CD8-positive, alpha-beta T cell (primary cell): ENCODE measurements at regions of chr11 and their contacts with region 1.

Region 1: GRCh38 chr11:75562048-75562835 is at the start of gene SERPINH1:
- DNase-seq: peak in 8 of 9 experiments; percentile 32 to 74 (median 51)
- ATAC-seq: peak; percentile 79
- H3K4me3 ChIP-seq: peak within 1 kb of the TSS; percentile 81 to 91
- H3K4me3 Mint-ChIP-seq: peak within 1 kb of the TSS; percentile 98
- H3K27ac ChIP-seq: peak within 1 kb of the TSS; percentile 64 to 85
- H3K27ac Mint-ChIP-seq: peak within 1 kb of the TSS; percentile 95
- H3K4me1 ChIP-seq: peaks cover 42% of the 10 kb centered on the region
- H3K4me1 Mint-ChIP-seq: peaks cover 49% of the 10 kb centered on the region
- H3K27me3 ChIP-seq: no peaks in the 10 kb centered on the region
- H3K27me3 Mint-ChIP-seq: no peaks in the 10 kb centered on the region
- CTCF ChIP-seq: no peak
- total RNA-seq, gene SERPINH1: 2.1 to 2.4 TPM

Region 2: DNA sequence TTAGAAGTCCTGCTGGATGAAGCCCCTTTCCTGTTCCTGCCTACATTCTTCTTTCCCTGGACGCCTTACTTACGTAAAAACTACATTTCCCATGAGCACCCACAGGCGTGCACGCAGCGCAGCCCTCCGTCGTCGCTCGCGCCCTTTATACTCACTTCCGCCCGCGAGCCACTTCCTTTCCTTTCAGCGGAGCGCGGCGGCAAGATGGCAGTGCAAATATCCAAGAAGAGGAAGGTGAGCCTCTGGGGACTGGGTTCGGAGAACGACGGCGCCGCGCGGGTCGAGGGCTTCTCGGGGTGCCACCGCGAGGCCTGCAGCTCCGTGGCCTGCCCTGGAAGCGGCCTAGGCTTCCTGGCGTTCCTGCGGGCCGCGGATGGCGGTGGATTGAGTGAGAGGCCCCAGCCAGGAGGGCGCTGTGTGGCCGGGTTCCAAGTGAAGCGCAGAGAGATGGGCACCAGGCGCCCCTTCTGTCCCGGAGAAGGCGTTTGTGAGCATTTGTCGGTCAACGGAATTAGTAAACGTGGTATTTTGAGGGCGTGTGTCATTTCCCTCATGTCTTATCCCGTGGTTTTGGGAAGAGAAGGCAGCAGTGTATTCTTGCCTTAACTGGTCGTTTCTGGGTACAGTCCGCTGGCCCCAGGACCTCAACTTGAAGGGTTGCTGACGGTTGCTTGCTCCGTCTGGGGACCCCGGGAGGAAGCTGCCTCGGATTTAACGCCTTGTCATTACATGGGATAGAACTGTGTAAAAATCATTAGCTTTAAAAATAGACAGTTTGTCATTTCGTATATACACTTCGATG is 162.7 kb before region 1 on chr11 and contains the start of gene RPS3:
- CTCF ChIA-PET with region 1: no interaction called
- POLR2A ChIA-PET with region 1: no interaction called
- intact Hi-C with region 1: loop called in 1 of 2 experiments (anchors 1 kb)
- DNase-seq: peak; percentile 72 to 93 (median 88)
- ATAC-seq: peak; percentile 88
- H3K4me3 ChIP-seq: peak within 1 kb of the TSS; percentile 69 to 76
- H3K4me3 Mint-ChIP-seq: peak within 1 kb of the TSS; percentile 95
- H3K27ac ChIP-seq: peak within 1 kb of the TSS; percentile 88 to 89
- H3K27ac Mint-ChIP-seq: peak within 1 kb of the TSS; percentile 95
- H3K4me1 ChIP-seq: peaks cover 28% of the 10 kb centered on the region
- H3K4me1 Mint-ChIP-seq: peaks cover 48% of the 10 kb centered on the region
- H3K27me3 ChIP-seq: no peaks in the 10 kb centered on the region
- H3K27me3 Mint-ChIP-seq: no peaks in the 10 kb centered on the region
- CTCF ChIP-seq: no peak
- total RNA-seq, gene RPS3: 4,683 to 5,039 TPM

Region 3: DNA sequence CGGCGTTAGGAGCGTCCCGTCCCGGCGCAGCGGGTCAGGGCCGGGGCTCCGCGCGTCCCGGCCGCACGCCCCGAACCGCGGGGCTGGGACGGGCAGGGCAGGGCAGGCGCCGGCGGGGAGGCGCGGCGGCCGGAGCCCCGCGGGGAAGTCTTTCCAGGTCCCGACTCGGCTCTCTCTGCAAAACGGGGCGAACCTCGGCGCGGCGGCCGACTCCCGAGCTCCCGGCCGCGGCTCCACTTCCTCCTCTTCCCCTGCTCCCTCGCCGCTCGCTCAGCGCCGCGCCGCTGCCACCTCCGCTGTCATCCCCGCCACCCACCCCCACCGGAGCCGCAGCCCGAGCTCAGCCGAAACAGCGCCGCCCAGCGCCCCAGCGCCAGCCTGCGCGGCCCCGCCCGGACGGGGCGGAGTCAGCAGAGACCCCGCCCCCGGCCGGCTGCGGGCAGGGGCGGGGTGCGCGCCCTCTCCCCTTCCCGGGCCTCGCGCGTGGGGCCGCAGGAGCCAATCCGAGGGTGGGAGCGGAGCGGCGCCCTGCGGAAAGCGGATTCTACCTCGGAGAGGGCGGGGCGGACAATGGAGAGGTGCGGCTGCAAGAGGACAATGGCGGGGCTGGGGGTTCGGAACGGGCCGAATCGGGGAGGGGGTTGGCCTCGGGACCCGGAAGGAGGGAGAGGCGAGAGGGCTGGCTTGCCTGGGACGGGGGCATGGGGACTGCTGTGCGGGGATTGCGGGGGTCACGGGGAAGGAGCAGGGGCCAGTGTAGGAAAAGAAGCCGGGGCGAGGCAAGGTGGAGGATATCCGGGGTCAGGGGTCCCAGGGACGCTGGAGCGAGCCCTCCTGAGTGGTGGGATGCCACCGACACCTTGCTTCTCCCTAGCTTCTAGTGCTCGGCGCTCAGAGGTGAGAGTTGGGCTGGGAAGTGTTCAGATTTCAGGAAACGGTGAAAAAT is 36.4 kb before region 1 on chr11 and contains the start of gene GDPD5:
- CTCF ChIA-PET with region 1: interaction called, 3 read pairs
- POLR2A ChIA-PET with region 1: no interaction called
- intact Hi-C with region 1: loop called (anchors 1 to 2 kb)
- DNase-seq: peak; percentile 63 to 93 (median 84)
- ATAC-seq: peak; percentile 97
- H3K4me3 ChIP-seq: peak within 1 kb of the TSS; percentile 66 to 78
- H3K4me3 Mint-ChIP-seq: peak within 1 kb of the TSS; percentile 89
- H3K27ac ChIP-seq: no peak within 1 kb of the TSS
- H3K27ac Mint-ChIP-seq: peak within 1 kb of the TSS; percentile 46
- H3K4me1 ChIP-seq: peaks cover 12% of the 10 kb centered on the region
- H3K4me1 Mint-ChIP-seq: peaks cover 26% of the 10 kb centered on the region
- H3K27me3 ChIP-seq: peaks cover 0 to 4% of the 10 kb centered on the region in 2 experiments
- H3K27me3 Mint-ChIP-seq: no peaks in the 10 kb centered on the region
- CTCF ChIP-seq: peak; percentile 39
- total RNA-seq, gene GDPD5: 15.9 to 18.3 TPM

Region 4: DNA sequence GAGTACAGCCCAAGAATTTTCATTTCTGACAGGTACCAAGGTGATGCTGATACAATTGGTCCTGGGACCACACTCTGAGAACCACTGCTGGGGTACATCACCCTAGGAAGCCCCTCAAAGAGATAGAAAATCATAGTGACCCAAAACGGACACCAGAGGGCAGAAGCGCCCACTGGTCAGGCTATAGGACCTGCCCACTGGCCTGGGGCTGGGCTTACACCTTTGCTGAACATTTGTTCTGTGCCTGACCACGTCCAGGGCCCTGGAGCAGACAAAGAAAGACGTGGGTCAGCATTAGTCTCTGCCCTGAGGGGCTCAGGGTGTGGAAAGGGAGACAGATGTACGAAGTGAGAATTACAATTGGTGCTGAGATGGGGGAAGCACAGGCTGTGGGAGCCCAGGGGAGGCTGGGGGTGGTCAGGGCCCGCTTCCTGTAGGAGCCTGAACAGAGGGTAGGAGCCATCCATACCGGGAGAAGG is 14.6 kb before region 1 on chr11:
- CTCF ChIA-PET with region 1: interaction called, 12 read pairs
- POLR2A ChIA-PET with region 1: interaction called, 3 read pairs
- intact Hi-C with region 1: no loop called
- DNase-seq: peak in 5 of 9 experiments; percentile 28 to 63 (median 56)
- ATAC-seq: peak; percentile 54
- H3K4me3 ChIP-seq: no peak overlapping the region
- H3K4me3 Mint-ChIP-seq: no peak overlapping the region
- H3K27ac ChIP-seq: no peak overlapping the region
- H3K27ac Mint-ChIP-seq: no peak overlapping the region
- H3K4me1 ChIP-seq: no peaks in the 10 kb centered on the region
- H3K4me1 Mint-ChIP-seq: peaks cover 2% of the 10 kb centered on the region
- H3K27me3 ChIP-seq: peaks cover 0 to 3% of the 10 kb centered on the region in 2 experiments
- H3K27me3 Mint-ChIP-seq: peaks cover 4% of the 10 kb centered on the region
- CTCF ChIP-seq: peak; percentile 80

Region 5: GRCh38 chr11:75577207-75577606 is 15.0 kb after region 1 on chr11:
- CTCF ChIA-PET with region 1: interaction called, 65 read pairs
- POLR2A ChIA-PET with region 1: interaction called, 12 read pairs
- intact Hi-C with region 1: loop called in 1 of 2 experiments (anchors 2 kb)
- DNase-seq: peak; percentile 33 to 74 (median 67)
- ATAC-seq: peak; percentile 77
- H3K4me3 ChIP-seq: no peak overlapping the region
- H3K4me3 Mint-ChIP-seq: no peak overlapping the region
- H3K27ac ChIP-seq: no peak overlapping the region
- H3K27ac Mint-ChIP-seq: no peak overlapping the region
- H3K4me1 ChIP-seq: peaks cover 6% of the 10 kb centered on the region
- H3K4me1 Mint-ChIP-seq: peaks cover 7% of the 10 kb centered on the region
- H3K27me3 ChIP-seq: no peaks in the 10 kb centered on the region
- H3K27me3 Mint-ChIP-seq: no peaks in the 10 kb centered on the region
- CTCF ChIP-seq: peak; percentile 65

Region 6: DNA sequence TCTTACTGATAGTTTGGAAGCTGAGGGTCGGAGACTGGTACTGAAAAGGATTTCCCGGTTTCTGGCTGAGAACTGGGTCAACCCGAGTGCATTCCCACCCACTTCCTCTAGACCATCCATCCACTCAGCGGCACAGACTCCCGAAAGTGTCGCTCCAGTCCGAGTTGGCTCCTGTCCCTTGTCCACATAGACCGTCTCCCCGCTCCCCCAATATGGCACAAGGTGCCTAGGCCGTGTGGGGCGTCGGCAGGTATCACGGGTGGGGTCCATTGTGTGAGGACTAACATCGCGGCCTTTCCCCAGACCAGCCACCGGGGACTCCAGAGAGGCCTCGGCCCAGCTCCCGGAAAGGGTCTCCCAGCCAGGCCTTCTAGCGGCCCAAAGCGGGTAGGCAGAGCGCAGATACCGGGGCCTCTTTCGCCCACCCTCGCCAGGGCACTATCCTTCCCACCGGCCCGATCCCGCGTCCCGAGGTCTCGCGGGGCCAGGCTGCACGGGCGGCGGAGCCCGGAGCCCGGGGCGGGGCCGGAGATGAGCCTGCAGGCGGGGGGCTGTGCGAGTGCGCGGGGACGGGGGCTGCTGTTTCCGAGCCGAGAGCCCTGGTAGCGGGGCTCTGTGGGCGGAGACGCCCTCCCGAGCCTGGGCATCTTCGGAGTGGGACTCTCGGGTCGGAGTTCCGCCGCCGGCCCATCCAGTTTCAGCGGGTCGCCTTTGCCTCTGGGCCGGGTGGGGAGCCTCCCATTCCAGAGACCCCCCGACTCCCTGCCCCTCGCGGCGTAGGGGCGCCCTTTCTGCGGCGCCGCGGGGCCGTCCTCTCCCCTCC is 20.9 kb after region 1 on chr11:
- CTCF ChIA-PET with region 1: interaction called, 65 read pairs
- POLR2A ChIA-PET with region 1: interaction called, 12 read pairs
- intact Hi-C with region 1: loop called in 1 of 2 experiments (anchors 2 kb)
- DNase-seq: peak in 8 of 9 experiments; percentile 7 to 81 (median 62)
- ATAC-seq: peak; percentile 95
- H3K4me3 ChIP-seq: peak overlapping the region; percentile 66 to 73
- H3K4me3 Mint-ChIP-seq: peak overlapping the region; percentile 87
- H3K27ac ChIP-seq: peak overlapping the region; percentile 53 to 68
- H3K27ac Mint-ChIP-seq: peak overlapping the region; percentile 84
- H3K4me1 ChIP-seq: peaks cover 9% of the 10 kb centered on the region
- H3K4me1 Mint-ChIP-seq: peaks cover 20% of the 10 kb centered on the region
- H3K27me3 ChIP-seq: no peaks in the 10 kb centered on the region
- H3K27me3 Mint-ChIP-seq: no peaks in the 10 kb centered on the region
- CTCF ChIP-seq: no peak

Region 7: GRCh38 chr11:75768112-75768908 is 206.1 kb after region 1 on chr11 and contains the start of gene DGAT2:
- CTCF ChIA-PET with region 1: no interaction called
- POLR2A ChIA-PET with region 1: no interaction called
- intact Hi-C with region 1: loop called in 1 of 2 experiments (anchors 10 kb)
- DNase-seq: peak; percentile 50 to 83 (median 67)
- ATAC-seq: peak; percentile 91
- H3K4me3 ChIP-seq: peak within 1 kb of the TSS; percentile 54 to 71
- H3K4me3 Mint-ChIP-seq: peak within 1 kb of the TSS; percentile 80
- H3K27ac ChIP-seq: no peak within 1 kb of the TSS
- H3K27ac Mint-ChIP-seq: peak within 1 kb of the TSS; percentile 49
- H3K4me1 ChIP-seq: peaks cover 18% of the 10 kb centered on the region
- H3K4me1 Mint-ChIP-seq: peaks cover 17% of the 10 kb centered on the region
- H3K27me3 ChIP-seq: peaks cover 4 to 8% of the 10 kb centered on the region in 2 experiments
- H3K27me3 Mint-ChIP-seq: peaks cover 16% of the 10 kb centered on the region
- CTCF ChIP-seq: no peak
- total RNA-seq, gene DGAT2: not detected